Calu3 (cell line): ENCODE measurements at regions of chr3 and their contacts with region 1.

Region 1: GRCh38 chr3:112519424-112520001 is 20.2 kb upstream of the BTLA start:
- DNase-seq: peak; percentile 31
- H3K4me3 Mint-ChIP-seq: no peak overlapping the region
- H3K27ac Mint-ChIP-seq: no peak overlapping the region
- H3K4me1 Mint-ChIP-seq: no peaks in the 10 kb centered on the region
- H3K27me3 Mint-ChIP-seq: no peaks in the 10 kb centered on the region
- CTCF ChIP-seq: peak; percentile 55

Region 2: DNA sequence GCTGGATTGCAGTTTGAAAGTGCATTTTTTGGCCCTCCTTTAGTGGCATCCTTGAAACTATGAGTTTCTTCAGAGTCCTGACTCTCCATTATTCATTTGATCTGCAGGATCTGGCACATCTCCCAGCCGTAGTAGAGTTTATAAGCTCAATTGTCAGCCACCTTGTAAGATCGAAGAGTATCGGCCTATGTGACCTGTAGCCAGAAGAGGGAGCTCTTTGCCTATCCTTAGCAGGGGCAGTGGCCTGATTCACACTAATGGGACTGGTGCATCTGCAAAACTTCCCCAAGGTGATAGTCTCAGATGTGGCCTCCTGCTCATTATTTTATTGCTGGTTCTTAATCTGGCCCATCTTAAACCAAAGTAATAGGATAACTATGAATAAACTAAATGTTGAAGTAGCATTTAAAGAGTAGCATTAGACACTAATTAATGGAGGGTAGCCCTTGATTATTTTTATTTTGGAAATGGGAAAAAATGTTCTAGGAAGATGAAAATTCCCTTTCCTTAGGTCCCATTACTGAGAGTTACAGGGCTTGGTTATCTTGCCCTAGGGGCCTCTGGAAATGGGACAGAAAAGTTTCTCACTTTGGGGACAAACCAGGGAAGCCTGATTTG is 407.6 kb before region 1 on chr3:
- CTCF ChIA-PET with region 1: no interaction called
- intact Hi-C with region 1: loop called (anchors 5 kb)
- DNase-seq: peak; percentile 47
- H3K4me3 Mint-ChIP-seq: no peak overlapping the region
- H3K27ac Mint-ChIP-seq: no peak overlapping the region
- H3K4me1 Mint-ChIP-seq: no peaks in the 10 kb centered on the region
- H3K27me3 Mint-ChIP-seq: no peaks in the 10 kb centered on the region
- CTCF ChIP-seq: peak; percentile 37

Region 3: GRCh38 chr3:112136959-112137693 is 382.4 kb before region 1 on chr3:
- CTCF ChIA-PET with region 1: no interaction called
- intact Hi-C with region 1: loop called (anchors 5 kb)
- DNase-seq: peak; percentile 26
- H3K4me3 Mint-ChIP-seq: no peak overlapping the region
- H3K27ac Mint-ChIP-seq: no peak overlapping the region
- H3K4me1 Mint-ChIP-seq: peaks cover 10% of the 10 kb centered on the region
- H3K27me3 Mint-ChIP-seq: no peaks in the 10 kb centered on the region
- CTCF ChIP-seq: peak; percentile 26

Region 4: GRCh38 chr3:112293368-112294321 is 225.9 kb before region 1 on chr3 and contains the start of gene SLC9C1:
- CTCF ChIA-PET with region 1: interaction called, 8 read pairs
- intact Hi-C with region 1: loop called (anchors 1 kb)
- DNase-seq: peak; percentile 63
- H3K4me3 Mint-ChIP-seq: peak within 1 kb of the TSS; percentile 71
- H3K27ac Mint-ChIP-seq: peak within 1 kb of the TSS; percentile 72
- H3K4me1 Mint-ChIP-seq: peaks cover 15% of the 10 kb centered on the region
- H3K27me3 Mint-ChIP-seq: no peaks in the 10 kb centered on the region
- CTCF ChIP-seq: no peak
- total RNA-seq, gene SLC9C1: not detected in 2 replicates

Region 5: DNA sequence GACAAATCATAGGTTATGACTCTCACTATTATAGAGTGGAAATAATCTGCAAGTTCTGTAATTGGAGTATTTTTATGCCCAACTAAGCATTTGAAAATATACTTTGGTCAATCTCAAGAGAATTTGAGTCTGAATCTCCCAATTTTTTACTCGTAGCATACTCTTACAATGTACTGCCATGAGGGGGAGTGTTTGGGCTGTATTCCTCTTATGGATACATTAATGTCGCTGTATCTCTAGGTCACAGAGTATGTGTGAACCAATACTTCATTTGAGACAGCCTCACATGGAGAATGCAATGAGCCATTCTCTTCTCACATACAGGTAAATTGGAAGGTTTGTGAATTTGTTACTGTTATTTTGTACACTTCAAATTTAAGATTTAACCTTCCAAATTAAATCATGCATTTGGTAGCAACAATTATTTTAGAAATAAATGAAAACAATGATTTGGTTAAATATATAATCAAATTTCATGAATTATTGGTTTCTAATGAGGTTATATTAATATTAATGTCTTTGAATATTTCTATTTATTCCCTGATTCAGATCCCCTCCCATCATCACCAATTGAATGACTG is 192.1 kb before region 1 on chr3:
- CTCF ChIA-PET with region 1: interaction called, 3 read pairs
- intact Hi-C with region 1: loop called (anchors 1 kb)
- DNase-seq: peak; percentile 40
- H3K4me3 Mint-ChIP-seq: no peak overlapping the region
- H3K27ac Mint-ChIP-seq: no peak overlapping the region
- H3K4me1 Mint-ChIP-seq: peaks cover 1% of the 10 kb centered on the region
- H3K27me3 Mint-ChIP-seq: no peaks in the 10 kb centered on the region
- CTCF ChIP-seq: no peak

Region 6: DNA sequence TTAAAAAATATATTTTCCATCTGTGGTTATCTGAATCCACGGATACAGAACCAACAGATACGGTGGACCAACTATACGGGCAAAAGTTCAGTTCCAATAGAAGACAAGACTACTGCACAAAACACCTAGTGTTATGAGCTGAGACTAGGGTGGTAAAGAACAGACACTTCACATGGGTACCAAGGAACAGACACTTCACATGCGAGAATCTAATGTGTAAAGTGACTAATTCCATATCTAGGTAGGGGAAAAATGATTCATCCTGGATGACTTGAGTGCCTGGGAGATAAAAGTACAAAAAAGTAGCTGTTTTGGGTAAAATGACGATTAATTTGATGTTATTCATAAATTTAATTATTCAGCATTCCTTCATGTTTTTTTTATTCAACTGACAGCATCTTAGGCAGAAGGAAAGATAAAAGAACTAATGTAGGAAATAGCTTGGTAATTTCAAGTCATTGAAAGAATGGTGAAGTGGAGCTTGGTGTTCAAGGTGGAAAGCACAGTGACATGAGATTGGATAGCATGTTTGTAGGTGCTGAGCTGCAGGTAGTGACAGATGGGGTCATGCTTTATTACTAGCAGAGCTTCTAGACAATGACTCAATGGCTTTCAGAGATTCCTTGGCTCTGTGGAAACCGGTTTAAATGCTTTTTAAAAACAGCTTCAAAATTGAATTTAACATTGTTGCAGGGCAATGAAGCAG is 181.3 kb before region 1 on chr3:
- CTCF ChIA-PET with region 1: no interaction called
- intact Hi-C with region 1: no loop called
- DNase-seq: no peak
- H3K4me3 Mint-ChIP-seq: no peak overlapping the region
- H3K27ac Mint-ChIP-seq: no peak overlapping the region
- H3K4me1 Mint-ChIP-seq: no peaks in the 10 kb centered on the region
- H3K27me3 Mint-ChIP-seq: peaks cover 14% of the 10 kb centered on the region
- CTCF ChIP-seq: no peak

Region 7: DNA sequence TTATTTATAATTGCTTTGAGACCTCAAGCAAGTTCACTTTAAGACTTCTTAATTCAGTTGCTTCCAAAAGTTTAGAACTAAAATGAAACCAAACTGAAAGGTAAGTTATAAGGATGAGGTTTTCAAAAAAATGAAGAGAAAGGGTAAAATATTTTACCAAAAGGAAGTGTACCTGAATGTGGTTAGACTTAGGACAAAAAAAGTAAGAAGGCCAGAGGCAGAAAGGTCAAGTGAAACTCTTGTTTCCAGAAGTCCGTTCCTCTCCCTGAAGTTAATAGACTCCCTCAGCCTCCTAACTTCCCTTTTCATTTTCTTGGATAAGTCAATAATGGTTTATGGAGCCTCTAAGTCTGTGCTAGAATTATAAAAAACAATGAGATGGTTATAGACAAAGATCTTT is 36.8 kb before region 1 on chr3:
- CTCF ChIA-PET with region 1: no interaction called
- intact Hi-C with region 1: no loop called
- DNase-seq: no peak
- H3K4me3 Mint-ChIP-seq: no peak overlapping the region
- H3K27ac Mint-ChIP-seq: no peak overlapping the region
- H3K4me1 Mint-ChIP-seq: no peaks in the 10 kb centered on the region
- H3K27me3 Mint-ChIP-seq: no peaks in the 10 kb centered on the region
- CTCF ChIP-seq: no peak

Region 8: DNA sequence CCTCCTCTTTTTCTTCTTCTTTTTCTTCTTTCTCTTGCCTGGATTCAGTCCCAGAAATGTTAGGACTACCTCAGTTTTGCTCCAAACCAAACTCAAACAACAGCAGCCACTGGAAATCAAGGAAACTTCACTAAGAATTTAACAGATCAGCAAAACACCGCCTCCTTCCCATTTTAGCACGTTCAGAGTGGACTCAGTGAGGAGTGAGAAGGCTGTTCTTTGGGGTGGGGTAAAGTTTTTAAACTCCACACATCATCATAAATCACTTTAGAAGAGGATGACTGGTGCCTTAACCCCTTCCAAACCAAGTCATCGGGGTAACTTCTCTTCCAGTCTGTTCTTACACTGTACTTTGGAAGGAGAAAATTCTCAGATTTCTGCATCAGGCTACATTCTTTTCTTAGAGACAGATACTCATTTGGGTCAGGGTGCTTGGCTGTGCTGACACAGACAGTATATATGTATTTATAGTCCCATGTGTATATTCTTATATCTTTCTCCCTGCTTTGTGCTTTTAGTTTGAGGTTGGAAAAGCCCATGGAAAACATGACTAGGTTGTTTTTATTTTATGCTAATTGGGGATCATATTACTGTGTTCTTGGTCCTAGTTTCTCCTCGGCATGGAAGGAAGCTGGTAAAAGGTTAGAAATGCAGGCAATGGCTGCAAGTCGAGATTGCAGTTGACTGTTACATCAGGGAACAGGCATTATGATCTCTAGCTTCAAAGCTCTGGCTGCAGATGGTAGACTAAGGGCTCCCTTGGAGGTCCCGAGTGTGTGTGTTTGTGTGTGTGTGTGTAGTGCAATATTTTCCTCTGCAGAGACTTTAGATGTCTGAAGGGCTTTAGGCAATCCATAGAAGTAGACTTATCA is 121.7 kb after region 1 on chr3 and contains the start of gene CCDC80:
- CTCF ChIA-PET with region 1: no interaction called
- intact Hi-C with region 1: no loop called
- DNase-seq: no peak
- H3K4me3 Mint-ChIP-seq: no peak within 1 kb of the TSS
- H3K27ac Mint-ChIP-seq: no peak within 1 kb of the TSS
- H3K4me1 Mint-ChIP-seq: peaks cover 19% of the 10 kb centered on the region
- H3K27me3 Mint-ChIP-seq: no peaks in the 10 kb centered on the region
- CTCF ChIP-seq: no peak
- total RNA-seq, gene CCDC80: 0.39 and 1.1 TPM in 2 replicates